ENCODE measurements at regions of chr10 and their contacts with region 1.

Region 1: GRCh38 chr10:68139448-68140272 is 30.4 kb downstream of the MYPN start:
- DNase-seq: no peak
- ATAC-seq: no peak
- H3K4me3 ChIP-seq: no peak overlapping the region
- H3K27ac ChIP-seq: peak overlapping the region in 1 of 2 experiments; percentile 59; a peak in 3 of 6 replicates
- H3K4me1 ChIP-seq: peaks cover 46% of the 10 kb centered on the region
- CTCF ChIP-seq: no peak
- EP300 ChIP-seq: no peak
- POLR2A ChIP-seq: no peak
- RAD21 ChIP-seq: no peak

Region 2: DNA sequence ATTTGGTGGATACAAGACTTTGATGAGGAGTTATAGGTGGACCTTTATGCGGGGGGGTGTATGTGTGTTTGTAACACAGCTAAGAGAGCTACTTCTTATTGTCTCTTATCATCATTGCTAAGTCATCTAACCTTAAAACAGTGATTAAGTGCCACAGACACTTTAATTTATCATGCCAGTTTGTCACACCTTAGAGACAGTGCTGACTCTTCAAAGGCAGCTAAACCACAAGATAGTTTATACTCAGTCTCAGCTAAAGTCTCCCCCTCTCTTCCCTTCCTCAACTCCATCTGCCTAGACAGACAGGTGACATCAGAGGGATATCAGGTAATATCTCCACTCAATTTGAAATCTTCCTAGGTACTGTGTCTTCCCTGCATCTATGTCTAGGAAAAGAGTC is 11.8 kb after region 1 on chr10:
- CTCF ChIA-PET with region 1: interaction called, 10 read pairs
- POLR2A ChIA-PET with region 1: no interaction called
- DNase-seq: no peak
- ATAC-seq: no peak
- H3K4me3 ChIP-seq: no peak overlapping the region
- H3K27ac ChIP-seq: peak overlapping the region; percentile 86 to 92
- H3K4me1 ChIP-seq: peaks cover 50% of the 10 kb centered on the region
- CTCF ChIP-seq: no peak
- EP300 ChIP-seq: no peak
- POLR2A ChIP-seq: no peak
- RAD21 ChIP-seq: no peak

Measured in A549 (cell line).